Naive thymus-derived CD4-positive, alpha-beta T cell (primary cell): ENCODE measurements at regions of chr5 and their contacts with region 1.

Region 1: DNA sequence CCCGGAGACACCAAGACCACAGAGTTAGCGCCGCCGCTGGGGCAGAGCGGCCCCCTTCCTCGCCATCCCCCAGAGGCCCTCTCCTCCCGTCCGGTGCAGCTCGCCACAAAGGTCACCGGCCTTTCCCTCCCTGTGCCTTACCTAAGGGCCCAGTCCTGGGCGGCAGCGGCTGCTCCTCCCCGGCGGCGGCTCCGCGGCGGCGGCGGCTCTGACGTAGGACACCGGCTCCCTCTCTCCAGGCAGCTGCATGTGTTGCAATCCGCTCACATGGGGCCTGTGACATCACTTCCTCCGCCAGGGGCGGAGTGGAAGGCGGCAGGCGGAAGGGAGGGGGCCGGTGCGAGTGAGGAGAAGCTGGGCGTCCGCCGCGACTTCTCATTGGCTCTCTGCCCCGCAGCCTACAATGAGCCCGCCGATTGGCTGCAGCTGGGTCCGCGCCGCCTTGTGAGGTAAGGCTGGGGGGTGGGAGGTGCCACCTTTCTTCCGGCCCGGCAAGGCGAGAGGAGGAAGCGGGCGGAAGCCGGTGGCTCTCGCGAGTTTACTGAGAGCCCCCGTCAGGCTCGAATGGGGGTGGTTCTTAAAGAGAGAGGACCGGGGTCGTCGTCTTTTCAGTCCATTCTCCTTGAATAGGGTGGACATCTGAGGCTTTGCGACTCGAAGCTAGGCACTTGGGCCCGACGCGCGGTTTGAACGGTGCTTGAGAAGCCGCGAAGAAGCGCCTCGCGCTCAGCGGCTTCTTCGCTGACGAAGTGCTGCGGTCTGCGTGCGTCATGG is at the start of gene ETF1:
- DNase-seq: peak; percentile 95 to 100 (median 100)
- ATAC-seq: peak; percentile 95
- H3K4me3 ChIP-seq: peak within 1 kb of the TSS; percentile 87
- H3K4me3 Mint-ChIP-seq: peak within 1 kb of the TSS; percentile 94 to 100 (median 99)
- H3K27ac ChIP-seq: peak within 1 kb of the TSS; percentile 94
- H3K27ac Mint-ChIP-seq: peak within 1 kb of the TSS; percentile 97 to 100 (median 100)
- H3K4me1 ChIP-seq: peaks cover 36 to 41% of the 10 kb centered on the region in 2 donors
- H3K4me1 Mint-ChIP-seq: peaks cover 55 to 91% (median 73%) of the 10 kb centered on the region in 7 donors
- H3K27me3 ChIP-seq: no peaks in the 10 kb centered on the region
- H3K27me3 Mint-ChIP-seq: no peaks in the 10 kb centered on the region
- total RNA-seq, gene ETF1: 40.6 to 137 (median 84.1) TPM

Region 2: DNA sequence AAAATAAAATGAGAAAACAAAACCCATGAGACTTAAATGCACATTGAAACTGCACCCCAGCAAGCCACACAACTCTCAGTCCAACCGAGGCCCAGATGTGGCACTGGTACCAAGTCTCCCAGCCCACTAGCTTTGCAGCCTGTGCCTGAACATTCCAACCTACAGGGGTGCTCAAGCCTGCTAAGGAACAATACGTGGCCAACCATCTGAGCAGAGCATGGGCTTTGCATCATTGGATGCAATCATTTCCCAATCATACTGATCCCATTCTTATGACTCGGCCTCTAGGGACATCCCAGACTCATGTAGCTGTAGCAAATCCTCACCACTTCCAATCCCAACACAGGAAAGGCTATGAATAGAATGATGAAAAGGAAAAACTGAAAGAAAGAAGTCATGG is 1341.3 kb before region 1 on chr5:
- CTCF ChIA-PET with region 1: no interaction called
- POLR2A ChIA-PET with region 1: no interaction called
- intact Hi-C with region 1: no loop called
- DNase-seq: no peak
- ATAC-seq: no peak
- H3K4me3 ChIP-seq: no peak overlapping the region
- H3K4me3 Mint-ChIP-seq: no peak overlapping the region
- H3K27ac ChIP-seq: no peak overlapping the region
- H3K27ac Mint-ChIP-seq: no peak overlapping the region
- H3K4me1 ChIP-seq: no peaks in the 10 kb centered on the region
- H3K4me1 Mint-ChIP-seq: peaks cover 0 to 1% (median 0%) of the 10 kb centered on the region in 7 donors
- H3K27me3 ChIP-seq: no peaks in the 10 kb centered on the region
- H3K27me3 Mint-ChIP-seq: peaks cover 0 to 25% (median 14%) of the 10 kb centered on the region in 5 donors

Region 3: DNA sequence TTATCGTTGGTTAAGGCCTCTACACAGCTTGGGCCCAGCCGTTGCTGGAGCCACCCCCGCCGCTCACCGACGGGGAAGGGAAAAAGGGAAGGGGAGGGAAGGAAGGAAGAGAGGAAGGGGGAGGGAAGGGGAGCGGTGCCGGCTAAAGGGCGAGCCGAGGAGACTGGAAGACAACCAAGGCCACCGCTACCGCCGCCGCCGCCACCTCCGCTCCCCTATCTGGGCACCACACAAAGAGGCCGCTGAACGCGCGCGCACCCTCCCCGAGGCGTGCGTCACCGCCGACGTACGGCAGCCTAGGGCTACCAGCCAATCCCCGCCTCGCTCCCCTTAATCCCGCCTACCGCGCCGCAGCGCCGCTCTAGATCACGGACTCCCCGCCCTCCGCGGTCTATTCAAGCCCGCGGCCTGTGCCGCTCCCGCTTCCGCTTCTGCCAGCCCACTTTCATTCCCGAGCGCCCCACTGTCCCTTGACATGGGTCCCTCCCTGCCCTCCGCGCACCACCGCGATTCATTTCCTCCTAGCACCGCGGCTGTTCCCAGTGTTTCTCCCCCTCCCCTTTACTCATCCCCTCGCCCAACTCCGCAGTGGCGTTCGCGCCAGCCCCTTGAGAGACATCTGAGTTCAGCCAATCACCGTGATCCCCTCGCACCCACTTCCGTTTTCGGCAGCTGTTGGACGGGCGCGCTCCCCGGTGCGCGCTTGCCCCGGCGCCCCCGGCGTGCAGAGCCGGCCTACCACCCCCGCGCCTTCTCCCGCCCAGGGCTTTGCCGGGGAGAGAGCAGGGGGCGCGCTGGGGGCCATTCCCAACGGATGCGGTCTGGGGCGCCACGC is 788.8 kb before region 1 on chr5 and contains the start of gene HNRNPA0:
- CTCF ChIA-PET with region 1: no interaction called
- POLR2A ChIA-PET with region 1: interaction called, 11 read pairs
- intact Hi-C with region 1: loop called (anchors 1 to 10 kb)
- DNase-seq: peak; percentile 94 to 99 (median 98)
- ATAC-seq: peak; percentile 90
- H3K4me3 ChIP-seq: peak within 1 kb of the TSS; percentile 98
- H3K4me3 Mint-ChIP-seq: peak within 1 kb of the TSS; percentile 85 to 100 (median 98)
- H3K27ac ChIP-seq: peak within 1 kb of the TSS; percentile 98
- H3K27ac Mint-ChIP-seq: peak within 1 kb of the TSS; percentile 99 to 100 (median 100)
- H3K4me1 ChIP-seq: peaks cover 17 to 20% of the 10 kb centered on the region in 2 donors
- H3K4me1 Mint-ChIP-seq: peaks cover 21 to 43% (median 31%) of the 10 kb centered on the region in 7 donors
- H3K27me3 ChIP-seq: no peaks in the 10 kb centered on the region
- H3K27me3 Mint-ChIP-seq: peaks cover 0 to 2% (median 0%) of the 10 kb centered on the region in 5 donors
- total RNA-seq, gene HNRNPA0: 30.0 to 40.2 (median 30.7) TPM

Region 4: GRCh38 chr5:138170299-138170698 is 372.8 kb before region 1 on chr5:
- CTCF ChIA-PET with region 1: no interaction called
- POLR2A ChIA-PET with region 1: no interaction called
- intact Hi-C with region 1: no loop called
- DNase-seq: no peak
- ATAC-seq: no peak
- H3K4me3 ChIP-seq: no peak overlapping the region
- H3K4me3 Mint-ChIP-seq: no peak overlapping the region
- H3K27ac ChIP-seq: no peak overlapping the region
- H3K27ac Mint-ChIP-seq: no peak overlapping the region
- H3K4me1 ChIP-seq: no peaks in the 10 kb centered on the region
- H3K4me1 Mint-ChIP-seq: peaks cover 0 to 15% (median 8%) of the 10 kb centered on the region in 7 donors
- H3K27me3 ChIP-seq: no peaks in the 10 kb centered on the region
- H3K27me3 Mint-ChIP-seq: no peaks in the 10 kb centered on the region

Region 5: GRCh38 chr5:138331449-138332368 is 211.4 kb before region 1 on chr5 and contains the start of gene CDC25C:
- CTCF ChIA-PET with region 1: no interaction called
- POLR2A ChIA-PET with region 1: interaction called, 4 read pairs
- intact Hi-C with region 1: loop called in 1 of 2 experiments (anchors 1 kb)
- DNase-seq: peak; percentile 87 to 98 (median 96)
- ATAC-seq: peak; percentile 100
- H3K4me3 ChIP-seq: peak within 1 kb of the TSS; percentile 85
- H3K4me3 Mint-ChIP-seq: peak within 1 kb of the TSS; percentile 83 to 95 (median 86)
- H3K27ac ChIP-seq: peak within 1 kb of the TSS; percentile 49
- H3K27ac Mint-ChIP-seq: peak within 1 kb of the TSS; percentile 48 to 92 (median 68)
- H3K4me1 ChIP-seq: peaks cover 1 to 7% of the 10 kb centered on the region in 2 donors
- H3K4me1 Mint-ChIP-seq: peaks cover 7 to 35% (median 14%) of the 10 kb centered on the region in 7 donors
- H3K27me3 ChIP-seq: no peaks in the 10 kb centered on the region
- H3K27me3 Mint-ChIP-seq: no peaks in the 10 kb centered on the region
- total RNA-seq, gene CDC25C: 9.8 TPM in 1 of 5 experiments, not detected in the others

Region 6: DNA sequence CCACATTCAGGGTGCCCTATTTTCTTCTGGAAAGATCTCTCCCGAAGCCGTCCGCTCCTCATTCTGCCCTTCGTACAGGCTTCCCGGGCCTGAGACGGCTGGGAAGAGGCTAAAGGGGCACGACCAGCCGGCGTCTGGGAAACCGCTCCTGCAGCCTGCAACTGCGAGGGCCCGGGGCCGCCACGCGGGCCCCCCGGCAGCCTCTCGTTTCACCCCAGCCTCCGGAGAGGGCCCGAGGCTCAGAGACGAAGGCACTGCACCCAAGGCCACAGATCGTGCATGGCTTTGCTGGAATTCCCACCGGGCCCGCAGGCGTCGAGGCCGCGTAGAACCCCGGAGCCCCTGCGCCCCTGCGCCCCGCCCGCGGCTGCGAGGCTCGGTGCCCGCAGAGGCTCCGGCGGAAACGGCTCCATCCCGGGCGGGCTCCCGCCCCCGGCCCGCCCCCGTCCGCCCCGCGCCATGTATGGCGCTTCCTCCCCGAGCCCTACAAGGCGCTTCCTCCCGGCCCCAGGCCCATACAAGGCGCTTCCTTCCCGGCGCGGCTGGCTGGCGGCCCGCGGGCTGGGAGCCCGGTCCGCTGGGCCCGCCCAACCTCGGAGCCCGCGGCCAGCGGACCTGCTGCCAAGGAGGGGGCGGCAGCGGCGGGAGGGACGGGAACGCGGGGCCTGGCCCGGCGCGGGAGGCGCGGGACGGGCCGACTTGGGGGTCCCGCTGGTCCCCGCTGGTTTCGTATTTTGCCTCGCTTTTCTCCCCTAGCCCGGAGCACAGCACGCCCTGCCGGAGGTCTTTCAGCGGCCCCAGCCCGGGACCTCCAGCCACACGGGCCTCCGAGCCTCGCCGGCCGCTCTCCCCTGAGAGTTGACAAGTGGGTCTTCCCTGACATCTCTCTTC is 51.2 kb before region 1 on chr5:
- CTCF ChIA-PET with region 1: no interaction called
- POLR2A ChIA-PET with region 1: no interaction called
- intact Hi-C with region 1: loop called (anchors 1 kb)
- DNase-seq: peak; percentile 66 to 87 (median 81)
- ATAC-seq: peak; percentile 99
- H3K4me3 ChIP-seq: peak overlapping the region; percentile 69
- H3K4me3 Mint-ChIP-seq: peak overlapping the region; percentile 76 to 97 (median 92)
- H3K27ac ChIP-seq: peak overlapping the region; percentile 37
- H3K27ac Mint-ChIP-seq: peak overlapping the region in 7 of 9 donors; percentile 40 to 90 (median 67)
- H3K4me1 ChIP-seq: peaks cover 13 to 14% of the 10 kb centered on the region in 2 donors
- H3K4me1 Mint-ChIP-seq: peaks cover 8 to 21% (median 13%) of the 10 kb centered on the region in 7 donors
- H3K27me3 ChIP-seq: peaks cover 0 to 6% of the 10 kb centered on the region in 2 donors
- H3K27me3 Mint-ChIP-seq: peaks cover 0 to 38% (median 5%) of the 10 kb centered on the region in 5 donors

Region 7: DNA sequence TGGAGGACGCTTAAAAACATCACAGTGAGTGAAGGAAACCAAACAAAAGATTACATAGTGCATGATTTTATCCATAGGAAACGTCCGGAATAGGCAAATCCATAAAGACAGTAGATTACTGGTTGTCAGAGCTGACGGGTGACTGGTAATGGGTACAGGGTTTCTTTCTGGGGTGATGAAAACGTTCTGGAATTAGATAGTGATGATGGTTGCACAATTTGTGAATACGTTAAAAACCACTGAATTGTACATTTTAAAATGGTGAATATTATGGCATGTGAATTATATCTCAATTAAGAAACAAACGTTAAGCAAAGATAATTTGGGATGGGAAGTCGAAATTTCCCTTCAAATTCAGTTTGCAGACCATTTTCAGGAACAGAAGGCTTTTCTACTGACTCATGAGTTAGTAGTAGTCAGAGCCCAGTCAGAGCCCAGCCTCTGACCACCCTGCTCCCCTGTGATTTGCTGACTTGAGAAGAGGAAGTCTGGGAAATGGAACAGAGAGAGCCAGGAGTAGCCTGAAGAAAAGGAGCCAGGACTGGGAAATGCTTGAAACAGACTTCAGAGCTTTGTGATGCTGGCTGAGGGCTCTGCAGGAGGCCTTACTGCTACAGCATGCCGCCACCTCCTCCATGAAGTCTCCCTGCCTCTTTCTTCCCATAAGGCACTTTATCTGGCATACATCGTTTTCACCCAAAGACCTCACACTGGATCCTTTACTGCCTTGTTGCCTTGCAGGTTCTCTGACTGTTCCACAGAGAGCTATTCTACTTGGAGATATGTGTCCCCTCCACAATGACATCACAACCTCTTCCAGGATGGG is 163.7 kb after region 1 on chr5:
- CTCF ChIA-PET with region 1: no interaction called
- POLR2A ChIA-PET with region 1: no interaction called
- intact Hi-C with region 1: no loop called
- DNase-seq: no peak
- ATAC-seq: no peak
- H3K4me3 ChIP-seq: no peak overlapping the region
- H3K4me3 Mint-ChIP-seq: peak overlapping the region in 1 of 10 donors; percentile 2
- H3K27ac ChIP-seq: no peak overlapping the region
- H3K27ac Mint-ChIP-seq: no peak overlapping the region
- H3K4me1 ChIP-seq: no peaks in the 10 kb centered on the region
- H3K4me1 Mint-ChIP-seq: no peaks in the 10 kb centered on the region
- H3K27me3 ChIP-seq: peaks cover 0 to 6% of the 10 kb centered on the region in 2 donors
- H3K27me3 Mint-ChIP-seq: peaks cover 66 to 83% (median 70%) of the 10 kb centered on the region in 5 donors

Region 8: GRCh38 chr5:139197710-139198669 is 654.8 kb after region 1 on chr5 and contains the start of gene SIL1:
- CTCF ChIA-PET with region 1: no interaction called
- POLR2A ChIA-PET with region 1: no interaction called
- intact Hi-C with region 1: loop called (anchors 1 kb)
- DNase-seq: peak; percentile 88 to 94 (median 91)
- ATAC-seq: peak; percentile 99
- H3K4me3 ChIP-seq: peak within 1 kb of the TSS; percentile 97
- H3K4me3 Mint-ChIP-seq: peak within 1 kb of the TSS; percentile 83 to 96 (median 90)
- H3K27ac ChIP-seq: peak within 1 kb of the TSS; percentile 89
- H3K27ac Mint-ChIP-seq: peak within 1 kb of the TSS; percentile 86 to 96 (median 91)
- H3K4me1 ChIP-seq: peaks cover 8% of the 10 kb centered on the region in 2 donors
- H3K4me1 Mint-ChIP-seq: peaks cover 17 to 38% (median 26%) of the 10 kb centered on the region in 7 donors
- H3K27me3 ChIP-seq: no peaks in the 10 kb centered on the region
- H3K27me3 Mint-ChIP-seq: no peaks in the 10 kb centered on the region
- total RNA-seq, gene SIL1: 11.9 to 27.1 (median 22.8) TPM

Region 9: GRCh38 chr5:139403787-139404483 is 860.8 kb after region 1 on chr5 and contains the start of gene SPATA24:
- CTCF ChIA-PET with region 1: no interaction called
- POLR2A ChIA-PET with region 1: interaction called, 3 read pairs
- intact Hi-C with region 1: loop called (anchors 1 kb)
- DNase-seq: peak; percentile 90 to 99 (median 98)
- ATAC-seq: peak; percentile 94
- H3K4me3 ChIP-seq: peak within 1 kb of the TSS; percentile 56
- H3K4me3 Mint-ChIP-seq: peak within 1 kb of the TSS; percentile 88 to 98 (median 94)
- H3K27ac ChIP-seq: peak within 1 kb of the TSS; percentile 88
- H3K27ac Mint-ChIP-seq: peak within 1 kb of the TSS; percentile 96 to 100 (median 99)
- H3K4me1 ChIP-seq: peaks cover 16 to 18% of the 10 kb centered on the region in 2 donors
- H3K4me1 Mint-ChIP-seq: peaks cover 26 to 42% (median 36%) of the 10 kb centered on the region in 7 donors
- H3K27me3 ChIP-seq: no peaks in the 10 kb centered on the region
- H3K27me3 Mint-ChIP-seq: no peaks in the 10 kb centered on the region
- total RNA-seq, gene SPATA24: 4.4 to 7.6 (median 5.8) TPM

Region 10: DNA sequence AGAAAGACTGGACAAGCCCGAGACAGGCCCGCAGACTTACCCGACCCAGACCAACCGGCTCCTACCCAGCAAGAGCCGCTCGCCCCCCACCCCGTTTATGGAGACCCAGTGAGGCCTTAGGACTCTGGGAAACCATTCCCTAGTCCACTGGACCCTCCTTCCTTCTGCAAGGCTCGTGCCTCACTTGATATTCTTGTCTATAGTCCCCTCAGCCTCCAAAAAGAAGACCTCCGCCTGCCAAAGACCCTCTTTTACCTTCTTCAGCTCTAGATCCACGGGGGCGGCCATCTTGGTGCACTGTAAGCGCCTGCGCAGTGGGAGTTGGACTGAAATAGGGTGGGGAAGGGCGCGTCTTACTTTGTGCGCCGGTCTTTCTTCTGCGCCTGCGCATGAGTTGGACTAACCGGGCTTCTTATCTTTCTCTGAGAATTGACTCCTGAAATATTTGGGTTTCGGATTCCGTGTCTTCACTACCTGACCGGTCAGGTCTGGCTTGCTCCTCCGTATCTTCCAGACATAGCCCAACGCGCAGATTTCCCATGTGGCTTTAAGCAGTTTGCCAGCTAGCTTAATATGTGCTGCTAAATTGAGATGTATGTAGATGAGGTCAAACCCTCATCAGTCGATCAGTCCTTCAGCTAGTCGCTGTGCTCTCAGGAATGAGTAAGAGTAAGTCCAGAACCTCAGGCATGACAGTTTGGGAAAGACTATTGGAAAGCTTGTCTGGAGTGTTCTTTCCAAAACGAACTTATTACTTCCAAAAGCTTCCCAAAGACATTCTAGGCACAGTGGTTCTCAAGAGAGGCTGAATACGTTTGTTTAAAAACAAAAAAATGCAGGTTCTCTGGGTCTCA is 1759.9 kb after region 1 on chr5 and contains the start of gene PFDN1:
- CTCF ChIA-PET with region 1: no interaction called
- POLR2A ChIA-PET with region 1: no interaction called
- intact Hi-C with region 1: loop called in 1 of 2 experiments (anchors 2 kb)
- DNase-seq: peak; percentile 79 to 94 (median 89)
- ATAC-seq: peak; percentile 99
- H3K4me3 ChIP-seq: peak within 1 kb of the TSS; percentile 90
- H3K4me3 Mint-ChIP-seq: peak within 1 kb of the TSS; percentile 92 to 100 (median 98)
- H3K27ac ChIP-seq: peak within 1 kb of the TSS; percentile 91
- H3K27ac Mint-ChIP-seq: peak within 1 kb of the TSS; percentile 95 to 100 (median 98)
- H3K4me1 ChIP-seq: peaks cover 10 to 11% of the 10 kb centered on the region in 2 donors
- H3K4me1 Mint-ChIP-seq: peaks cover 4 to 39% (median 33%) of the 10 kb centered on the region in 7 donors
- H3K27me3 ChIP-seq: no peaks in the 10 kb centered on the region
- H3K27me3 Mint-ChIP-seq: peaks cover 0 to 9% (median 5%) of the 10 kb centered on the region in 5 donors
- total RNA-seq, gene PFDN1: 24.8 to 52.7 (median 28.2) TPM